H1 (cell line): ENCODE measurements at regions of chr6 and their contacts with region 1.

Region 1: DNA sequence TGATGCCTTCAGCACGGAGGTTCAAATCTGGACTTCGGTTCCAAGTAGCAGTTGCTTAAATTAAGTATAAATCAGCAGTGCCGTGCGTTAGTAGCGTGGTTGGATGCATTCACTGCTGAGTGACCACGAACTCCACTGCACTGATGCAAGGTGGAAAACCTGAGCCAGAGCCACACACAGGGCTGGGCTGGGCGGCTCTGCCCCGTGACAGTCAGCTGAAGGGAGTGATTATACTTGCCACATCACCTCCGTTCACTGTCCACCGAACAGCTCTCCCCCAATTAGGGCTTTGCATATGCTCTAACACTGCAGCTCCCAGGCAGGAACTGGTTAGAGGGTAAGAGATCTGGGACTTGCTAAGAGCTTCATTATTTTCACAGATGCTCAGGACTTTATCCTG is 22.2 kb downstream of the PPP1R3G start:
- DNase-seq: no peak
- H3K4me3 ChIP-seq: no peak overlapping the region
- H3K27ac ChIP-seq: no peak overlapping the region
- H3K4me1 ChIP-seq: no peaks in the 10 kb centered on the region; a peak in 1 of 7 replicates
- H3K27me3 ChIP-seq: no peaks in the 10 kb centered on the region
- CTCF ChIP-seq: no peak
- EP300 ChIP-seq: no peak
- POLR2A ChIP-seq: no peak
- RAD21 ChIP-seq: no peak

Region 2: DNA sequence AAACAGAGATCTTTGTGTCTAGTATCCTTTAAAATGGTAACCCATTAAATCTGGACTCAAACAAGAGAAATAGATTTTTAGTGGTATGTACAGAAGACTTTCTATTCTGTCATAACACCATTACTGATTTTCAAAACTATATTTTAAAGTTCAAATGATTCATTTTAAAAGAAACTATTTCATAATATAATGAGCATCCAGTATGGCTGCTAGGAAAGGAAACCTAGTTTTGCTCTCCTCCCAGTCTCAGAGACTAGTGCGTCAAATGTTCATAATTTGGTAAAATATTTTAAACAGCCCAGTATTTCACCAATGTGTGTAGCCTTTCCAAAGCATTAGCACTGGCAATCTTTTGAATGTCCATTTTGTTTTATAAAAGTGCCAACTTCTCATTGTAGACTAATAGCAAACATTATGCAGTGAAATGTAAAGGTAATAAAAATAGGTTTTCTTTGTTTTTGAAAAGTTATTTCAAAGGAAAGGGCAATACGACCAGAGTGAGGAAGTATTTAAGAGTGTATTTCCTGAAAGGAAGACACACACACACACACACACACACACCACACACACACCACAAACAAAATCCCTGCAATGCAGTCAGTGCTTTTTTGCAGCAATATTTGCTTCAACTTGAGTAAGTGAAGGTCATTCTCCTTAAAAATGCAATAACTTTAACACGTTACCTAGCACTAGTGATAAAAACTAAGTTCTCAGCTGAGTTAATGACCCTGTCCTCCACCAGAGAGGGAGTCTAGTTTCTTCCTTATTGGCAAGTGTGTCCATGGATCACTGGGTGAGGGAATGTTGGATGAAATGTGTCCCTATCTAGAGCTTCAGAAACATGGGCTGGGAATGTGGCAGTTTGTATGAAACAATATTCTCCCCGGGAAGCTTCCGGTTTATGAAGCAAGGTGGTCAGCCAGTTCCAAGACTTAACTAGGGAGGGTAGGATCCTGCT is 17.6 kb before region 1 on chr6:
- CTCF ChIA-PET with region 1: interaction called, 12 read pairs
- POLR2A ChIA-PET with region 1: interaction called, 3 read pairs
- DNase-seq: peak in 1 of 2 experiments; percentile 16
- H3K4me3 ChIP-seq: no peak overlapping the region
- H3K27ac ChIP-seq: no peak overlapping the region
- H3K4me1 ChIP-seq: peaks cover 0 to 13% (median 8%) of the 10 kb centered on the region in 4 experiments; a peak in 4 of 7 replicates
- H3K27me3 ChIP-seq: peaks cover 26 to 34% (median 31%) of the 10 kb centered on the region in 4 experiments
- CTCF ChIP-seq: no peak
- EP300 ChIP-seq: no peak
- POLR2A ChIP-seq: no peak
- RAD21 ChIP-seq: no peak

Region 3: DNA sequence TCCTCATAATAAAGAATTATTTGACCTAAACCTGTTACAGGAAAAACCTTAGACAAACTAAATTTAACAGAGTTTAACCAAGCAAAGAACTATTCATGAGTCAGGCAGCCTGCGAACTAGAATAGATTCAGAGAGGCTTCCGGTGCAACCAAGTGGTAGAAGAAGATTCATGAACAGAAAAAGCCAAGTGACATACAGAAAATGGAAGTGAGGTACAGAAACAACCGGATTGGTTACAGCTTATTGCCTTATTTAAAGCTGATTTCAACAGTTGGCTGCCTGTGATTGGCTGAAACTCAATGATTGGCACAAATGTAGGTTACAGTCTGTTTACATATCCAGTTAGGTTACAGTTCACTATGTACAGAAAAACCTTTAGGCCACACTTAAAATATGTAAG is 12.1 kb before region 1 on chr6:
- CTCF ChIA-PET with region 1: interaction called, 18 read pairs
- POLR2A ChIA-PET with region 1: no interaction called
- DNase-seq: no peak
- H3K4me3 ChIP-seq: no peak overlapping the region
- H3K27ac ChIP-seq: no peak overlapping the region
- H3K4me1 ChIP-seq: no peaks in the 10 kb centered on the region
- H3K27me3 ChIP-seq: no peaks in the 10 kb centered on the region; a peak in 2 of 7 replicates
- CTCF ChIP-seq: no peak
- EP300 ChIP-seq: no peak
- POLR2A ChIP-seq: no peak
- RAD21 ChIP-seq: no peak